Psoas muscle (tissue), 8 donors: ENCODE measurements at regions of chr4 and their contacts with region 1.

Region 1: GRCh38 chr4:8391972-8392371 is 48.6 kb downstream of the ACOX3 start:
- DNase-seq: peak; percentile 71 to 83
- ATAC-seq: peak; percentile 83 to 85 (median 84)
- H3K4me3 ChIP-seq: no peak overlapping the region
- H3K27ac ChIP-seq: peak overlapping the region; percentile 88
- H3K4me1 ChIP-seq: peaks cover 39% of the 10 kb centered on the region
- H3K27me3 ChIP-seq: no peaks in the 10 kb centered on the region
- CTCF ChIP-seq: peak; percentile 8

Region 2: DNA sequence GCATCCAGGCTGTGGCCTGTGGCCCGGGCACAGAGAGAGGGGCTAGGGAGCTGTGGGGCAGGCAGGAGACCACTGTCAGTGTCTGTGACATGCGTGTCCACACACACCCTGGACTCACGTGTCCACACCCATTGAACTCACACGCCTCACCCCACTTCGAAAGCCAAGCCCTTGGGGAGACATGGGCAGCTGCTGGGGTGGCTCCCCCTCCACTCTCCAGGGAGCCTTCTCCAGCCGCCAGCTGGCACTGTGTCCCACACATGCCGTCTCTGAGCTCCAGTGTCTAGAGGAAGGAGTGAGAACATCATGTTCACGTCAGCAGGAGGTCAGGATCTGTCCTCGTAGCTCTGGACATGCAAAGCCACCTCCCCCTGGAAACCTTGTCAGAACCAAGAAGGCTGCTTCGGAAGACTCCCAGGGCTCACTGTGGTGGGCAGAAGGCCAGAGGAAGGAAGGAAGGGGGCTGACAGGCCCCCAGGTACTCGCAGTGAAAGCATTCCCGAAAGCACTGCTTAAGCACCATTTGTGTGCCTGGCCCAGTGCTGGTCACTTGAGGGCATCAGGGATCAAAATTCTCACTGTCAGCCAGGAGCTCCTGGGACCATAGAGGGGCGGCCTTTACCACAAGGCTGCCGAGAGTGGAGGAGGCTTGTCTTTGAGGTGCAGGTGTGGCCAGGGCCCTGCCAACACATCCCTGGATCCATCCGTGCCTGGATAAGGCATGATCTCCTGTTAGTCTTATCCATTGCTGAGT is 61.0 kb before region 1 on chr4:
- intact Hi-C with region 1: loop called in 1 of 2 experiments (anchors 5 kb)
- DNase-seq: peak; percentile 68 to 96
- ATAC-seq: peak; percentile 82 to 95 (median 92)
- H3K4me3 ChIP-seq: no peak overlapping the region
- H3K27ac ChIP-seq: peak overlapping the region; percentile 70
- H3K4me1 ChIP-seq: peaks cover 19% of the 10 kb centered on the region
- H3K27me3 ChIP-seq: no peaks in the 10 kb centered on the region
- CTCF ChIP-seq: no peak